Thyroid gland (tissue), 4 donors: ENCODE measurements at regions of chr6 and their contacts with region 1.

Region 1: GRCh38 chr6:132952031-132952867 is 137.9 kb downstream of the RPS12 start:
- DNase-seq: no peak
- H3K4me3 ChIP-seq: no peak overlapping the region
- H3K27ac ChIP-seq: no peak overlapping the region
- H3K4me1 ChIP-seq: no peaks in the 10 kb centered on the region
- H3K27me3 ChIP-seq: no peaks in the 10 kb centered on the region
- CTCF ChIP-seq: no peak
- POLR2A ChIP-seq: no peak

Region 2: DNA sequence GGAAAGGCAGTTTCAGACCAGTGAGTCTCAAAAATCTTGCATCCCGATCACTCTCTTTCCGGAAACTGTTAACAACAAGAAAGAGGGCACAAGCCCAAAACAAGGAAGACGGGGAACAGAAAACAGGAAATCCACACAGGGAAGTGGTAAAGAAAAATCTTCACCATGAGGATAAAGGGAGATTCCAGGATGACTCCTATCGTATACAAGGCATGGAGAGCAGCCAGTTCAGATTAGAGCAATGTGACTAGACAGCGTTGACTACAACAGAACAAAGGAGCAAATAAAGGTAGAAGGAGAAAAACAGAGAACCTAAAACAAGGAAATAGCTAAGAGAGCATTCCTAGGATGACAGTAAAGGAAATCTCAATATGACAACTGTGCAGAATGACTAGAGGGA is 264.9 kb before region 1 on chr6:
- intact Hi-C with region 1: no loop called
- DNase-seq: no peak
- H3K4me3 ChIP-seq: no peak overlapping the region
- H3K27ac ChIP-seq: no peak overlapping the region
- H3K4me1 ChIP-seq: no peaks in the 10 kb centered on the region
- H3K27me3 ChIP-seq: no peaks in the 10 kb centered on the region
- CTCF ChIP-seq: no peak
- POLR2A ChIP-seq: no peak

Region 3: GRCh38 chr6:132715204-132715603 is 237.0 kb before region 1 on chr6:
- intact Hi-C with region 1: no loop called
- DNase-seq: peak; percentile 1 to 4
- H3K4me3 ChIP-seq: no peak overlapping the region
- H3K27ac ChIP-seq: no peak overlapping the region
- H3K4me1 ChIP-seq: no peaks in the 10 kb centered on the region
- H3K27me3 ChIP-seq: no peaks in the 10 kb centered on the region
- CTCF ChIP-seq: no peak
- POLR2A ChIP-seq: no peak

Region 4: DNA sequence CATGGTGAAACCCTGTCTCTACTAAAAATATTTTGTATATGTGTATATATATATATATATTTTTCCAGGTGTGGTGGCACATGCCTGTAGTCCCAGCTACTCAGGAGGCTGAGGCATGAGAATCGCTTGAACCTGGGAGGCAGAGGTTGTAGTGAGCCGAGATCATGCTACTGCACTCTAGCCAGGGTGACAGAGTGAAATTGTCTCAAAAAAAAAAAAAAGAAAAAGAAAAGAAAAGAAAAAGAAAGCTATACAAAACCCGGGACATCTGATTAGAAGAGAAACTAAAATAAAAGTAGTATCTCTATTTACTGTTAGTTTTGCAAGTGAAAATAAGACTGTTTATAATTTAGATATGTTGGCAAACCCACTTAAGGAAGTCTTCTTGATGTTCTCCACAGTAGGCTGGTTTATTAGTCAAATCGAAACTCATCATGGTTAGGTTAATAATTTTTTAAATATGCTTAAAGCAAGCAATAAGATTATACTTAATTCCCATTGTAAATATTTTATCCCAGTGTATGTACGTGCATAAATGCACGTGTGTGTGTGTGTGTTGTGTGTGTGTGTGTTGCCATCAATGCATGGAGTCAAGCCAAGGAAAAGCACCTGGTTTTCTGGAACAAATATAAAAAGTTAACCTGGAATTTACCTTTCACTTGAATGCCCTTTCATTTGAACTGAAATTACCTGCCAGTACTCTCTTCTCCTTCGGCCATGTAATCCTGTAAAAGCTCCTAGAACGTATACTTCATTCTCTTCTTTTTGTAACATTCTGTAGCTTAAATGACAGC is 201.6 kb before region 1 on chr6:
- intact Hi-C with region 1: no loop called
- DNase-seq: no peak
- H3K4me3 ChIP-seq: no peak overlapping the region
- H3K27ac ChIP-seq: no peak overlapping the region
- H3K4me1 ChIP-seq: no peaks in the 10 kb centered on the region
- H3K27me3 ChIP-seq: no peaks in the 10 kb centered on the region
- CTCF ChIP-seq: no peak
- POLR2A ChIP-seq: no peak

Region 5: GRCh38 chr6:132820629-132821381 is 131.4 kb before region 1 on chr6:
- intact Hi-C with region 1: loop called (anchors 10 kb)
- DNase-seq: no peak
- H3K4me3 ChIP-seq: no peak overlapping the region
- H3K27ac ChIP-seq: no peak overlapping the region
- H3K4me1 ChIP-seq: peaks cover 5 to 11% of the 10 kb centered on the region in 2 donors
- H3K27me3 ChIP-seq: no peaks in the 10 kb centered on the region
- CTCF ChIP-seq: no peak
- POLR2A ChIP-seq: no peak

Region 6: DNA sequence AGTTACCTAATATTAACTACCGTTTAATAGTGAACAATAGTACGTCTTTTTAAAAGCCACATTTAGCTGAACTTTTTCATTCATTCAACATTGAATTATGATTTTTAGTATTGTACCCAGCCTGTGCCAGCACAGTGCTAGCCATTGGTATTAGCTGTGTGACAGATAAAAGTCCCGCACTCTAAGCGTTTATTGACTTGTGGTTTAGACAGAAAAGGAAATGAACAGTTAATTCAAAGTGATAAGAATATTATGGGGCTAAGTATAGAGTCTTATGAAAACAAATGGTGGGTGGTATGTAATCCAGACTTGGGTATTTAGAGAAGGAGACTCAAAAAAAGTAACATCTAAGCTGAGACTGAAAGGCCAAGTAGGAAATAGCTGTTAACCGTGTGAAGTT is 64.4 kb after region 1 on chr6:
- intact Hi-C with region 1: no loop called
- DNase-seq: no peak
- H3K4me3 ChIP-seq: no peak overlapping the region
- H3K27ac ChIP-seq: no peak overlapping the region
- H3K4me1 ChIP-seq: no peaks in the 10 kb centered on the region
- H3K27me3 ChIP-seq: no peaks in the 10 kb centered on the region
- CTCF ChIP-seq: no peak
- POLR2A ChIP-seq: no peak